Mammary epithelial cell (primary cell): ENCODE measurements at regions of chr3 and their contacts with region 1.

Region 1: GRCh38 chr3:142595951-142596725 is at the start of gene PLS1:
- DNase-seq: peak; percentile 92
- H3K4me3 ChIP-seq: peak within 1 kb of the TSS; percentile 67 to 87 (median 72)
- H3K27ac ChIP-seq: peak within 1 kb of the TSS; percentile 54
- H3K4me1 ChIP-seq: peaks cover 6% of the 10 kb centered on the region
- H3K27me3 ChIP-seq: no peaks in the 10 kb centered on the region
- CTCF ChIP-seq: peak in 1 of 2 donors; percentile 28
- total RNA-seq, gene PLS1: 4.0 to 6.8 TPM

Region 2: DNA sequence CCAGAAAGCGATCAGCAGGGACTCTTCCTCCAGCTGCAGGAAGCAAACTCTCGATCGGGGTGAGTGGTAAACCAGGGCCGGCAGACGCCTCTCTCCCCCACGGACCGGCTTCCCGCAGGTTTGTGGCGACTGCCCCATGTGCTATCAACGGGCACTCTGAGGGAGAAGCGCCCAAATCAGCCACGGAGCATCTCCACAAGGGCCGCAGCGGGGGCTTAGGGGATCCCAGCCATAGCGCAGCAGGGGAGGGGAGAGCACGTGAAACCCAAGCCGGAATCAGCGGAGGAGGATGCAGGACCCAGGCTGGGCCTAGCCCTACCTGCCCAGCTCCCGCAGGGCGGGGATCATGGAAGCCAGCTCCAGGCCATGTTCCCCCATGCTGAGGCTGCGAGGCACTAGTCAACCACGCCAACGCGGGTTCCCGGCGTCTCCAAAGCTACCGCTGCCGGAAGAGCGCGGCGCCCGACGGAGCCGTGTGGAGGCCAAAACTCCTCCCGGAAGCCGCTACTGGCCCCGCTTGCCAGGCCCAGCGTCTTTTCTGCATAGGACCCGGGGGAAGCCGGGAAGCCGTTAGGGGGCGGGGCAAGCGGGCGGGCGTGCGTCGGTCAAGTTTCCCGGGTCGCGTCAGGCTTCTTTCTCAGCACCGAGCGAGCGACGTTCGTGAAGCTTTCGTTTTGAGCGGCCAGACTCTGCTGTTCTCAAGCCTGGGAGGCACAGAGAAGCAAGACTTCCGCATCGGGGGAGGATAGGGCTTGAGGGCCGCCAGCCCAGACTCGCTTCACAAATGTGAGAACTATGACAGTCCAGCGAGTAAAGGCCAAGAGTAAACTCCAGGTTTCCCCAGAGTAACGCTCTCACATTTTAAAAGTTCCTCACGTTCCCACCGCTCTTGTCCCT is 17.6 kb before region 1 on chr3 and contains the start of gene ATR:
- CTCF ChIA-PET with region 1: no interaction called
- dilution Hi-C with region 1: no loop called
- in situ Hi-C with region 1: no loop called
- intact Hi-C with region 1: loop called (anchors 1 kb)
- DNase-seq: peak; percentile 98
- H3K4me3 ChIP-seq: peak within 1 kb of the TSS; percentile 82 to 100 (median 97)
- H3K27ac ChIP-seq: peak within 1 kb of the TSS; percentile 91
- H3K4me1 ChIP-seq: peaks cover 13% of the 10 kb centered on the region
- H3K27me3 ChIP-seq: no peaks in the 10 kb centered on the region
- CTCF ChIP-seq: no peak
- total RNA-seq, gene ATR: 31.1 to 43.2 TPM

Region 3: GRCh38 chr3:142649996-142650693 is 54.0 kb after region 1 on chr3:
- CTCF ChIA-PET with region 1: no interaction called
- dilution Hi-C with region 1: no loop called
- in situ Hi-C with region 1: no loop called
- intact Hi-C with region 1: loop called (anchors 1 kb)
- DNase-seq: no peak
- H3K4me3 ChIP-seq: no peak overlapping the region
- H3K27ac ChIP-seq: no peak overlapping the region
- H3K4me1 ChIP-seq: peaks cover 31% of the 10 kb centered on the region
- H3K27me3 ChIP-seq: no peaks in the 10 kb centered on the region
- CTCF ChIP-seq: no peak

Region 4: DNA sequence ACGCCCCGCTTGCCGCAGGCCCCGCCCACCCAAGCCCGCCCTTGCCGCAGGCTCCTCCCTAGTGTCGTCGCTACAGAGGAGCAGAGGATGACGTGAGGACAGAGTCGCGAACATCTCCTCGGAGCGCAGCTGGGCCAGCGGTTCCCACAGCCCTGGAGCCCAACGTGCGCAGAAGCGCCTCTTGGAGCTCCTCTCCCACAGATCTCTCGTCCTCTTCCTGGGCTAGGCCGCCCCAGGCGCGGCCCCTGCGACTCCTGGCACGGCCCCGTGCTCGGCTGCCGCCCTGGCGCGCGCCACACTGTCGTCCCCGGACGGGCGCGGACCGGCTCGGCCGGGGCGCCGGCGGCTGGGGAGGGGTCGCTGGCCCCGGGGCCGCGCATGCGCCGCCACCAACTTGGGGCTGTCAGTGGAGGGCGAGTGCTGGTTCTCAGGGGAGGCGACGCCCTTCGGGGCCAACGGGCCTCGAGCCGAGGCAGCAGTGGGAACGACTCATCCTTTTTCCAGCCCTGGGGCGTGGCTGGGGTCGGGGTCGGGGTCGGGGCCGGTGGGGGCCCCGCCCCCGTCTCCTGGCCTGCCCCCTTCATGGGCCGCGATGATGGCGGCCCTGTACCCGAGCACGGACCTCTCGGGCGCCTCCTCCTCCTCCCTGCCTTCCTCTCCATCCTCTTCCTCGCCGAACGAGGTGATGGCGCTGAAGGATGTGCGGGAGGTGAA is 128.0 kb after region 1 on chr3 and contains the start of gene TRPC1:
- CTCF ChIA-PET with region 1: no interaction called
- dilution Hi-C with region 1: no loop called
- in situ Hi-C with region 1: no loop called
- intact Hi-C with region 1: loop called (anchors 1 kb)
- DNase-seq: peak; percentile 79
- H3K4me3 ChIP-seq: peak within 1 kb of the TSS; percentile 73 to 99 (median 86)
- H3K27ac ChIP-seq: peak within 1 kb of the TSS; percentile 79
- H3K4me1 ChIP-seq: no peaks in the 10 kb centered on the region
- H3K27me3 ChIP-seq: no peaks in the 10 kb centered on the region
- CTCF ChIP-seq: no peak
- total RNA-seq, gene TRPC1: 15.7 to 26.8 TPM

Region 5: GRCh38 chr3:142808103-142808917 is 212.2 kb after region 1 on chr3:
- CTCF ChIA-PET with region 1: no interaction called
- dilution Hi-C with region 1: no loop called
- in situ Hi-C with region 1: loop called in 1 of 2 experiments (anchors 25 kb)
- intact Hi-C with region 1: loop called (anchors 5 kb)
- DNase-seq: peak; percentile 89
- H3K4me3 ChIP-seq: no peak overlapping the region
- H3K27ac ChIP-seq: peak overlapping the region; percentile 57
- H3K4me1 ChIP-seq: peaks cover 8% of the 10 kb centered on the region
- H3K27me3 ChIP-seq: no peaks in the 10 kb centered on the region
- CTCF ChIP-seq: no peak

Region 6: GRCh38 chr3:143001369-143002082 is 405.4 kb after region 1 on chr3 and contains the start of gene U2SURP:
- CTCF ChIA-PET with region 1: no interaction called
- dilution Hi-C with region 1: loop called (anchors 25 kb)
- in situ Hi-C with region 1: loop called in 1 of 2 experiments (anchors 10 kb)
- intact Hi-C with region 1: loop called (anchors 1 kb)
- DNase-seq: peak; percentile 98
- H3K4me3 ChIP-seq: peak within 1 kb of the TSS; percentile 56 to 89 (median 67)
- H3K27ac ChIP-seq: peak within 1 kb of the TSS; percentile 93
- H3K4me1 ChIP-seq: peaks cover 17% of the 10 kb centered on the region
- H3K27me3 ChIP-seq: no peaks in the 10 kb centered on the region
- CTCF ChIP-seq: no peak
- total RNA-seq, gene U2SURP: 76.7 to 122 TPM